IMR-90 (cell line): ENCODE measurements at regions of chrX and their contacts with region 1.

Region 1: GRCh38 chrX:150365051-150365989 is 2.2 kb downstream of the MAMLD1 start:
- DNase-seq: peak; percentile 50
- ATAC-seq: peak; percentile 30
- H3K4me3 ChIP-seq: peak overlapping the region; percentile 83
- H3K27ac ChIP-seq: peak overlapping the region; percentile 92
- H3K4me1 ChIP-seq: peaks cover 2% of the 10 kb centered on the region
- H3K27me3 ChIP-seq: no peaks in the 10 kb centered on the region
- CTCF ChIP-seq: peak; percentile 56
- POLR2A ChIP-seq: 0 out of 2 replicates have a peak, but pooled peaks have one; percentile 8
- RAD21 ChIP-seq: peak; percentile 32

Region 2: GRCh38 chrX:149950681-149951080 is 414.6 kb before region 1 on chrX:
- CTCF ChIA-PET with region 1: interaction called, 5 read pairs
- POLR2A ChIA-PET with region 1: no interaction called
- dilution Hi-C with region 1: no loop called
- in situ Hi-C with region 1: loop called (anchors 25 kb)
- intact Hi-C with region 1: loop called (anchors 1 kb)
- DNase-seq: peak; percentile 67
- ATAC-seq: peak; percentile 70; the same call in 1 of the 2 replicates
- H3K4me3 ChIP-seq: no peak overlapping the region
- H3K27ac ChIP-seq: no peak overlapping the region
- H3K4me1 ChIP-seq: no peaks in the 10 kb centered on the region
- H3K27me3 ChIP-seq: no peaks in the 10 kb centered on the region
- CTCF ChIP-seq: peak; percentile 48
- POLR2A ChIP-seq: no peak
- RAD21 ChIP-seq: peak; percentile 56

Region 3: GRCh38 chrX:150036181-150037040 is 328.9 kb before region 1 on chrX:
- CTCF ChIA-PET with region 1: no interaction called
- POLR2A ChIA-PET with region 1: no interaction called
- dilution Hi-C with region 1: no loop called
- in situ Hi-C with region 1: no loop called
- intact Hi-C with region 1: loop called (anchors 5 kb)
- DNase-seq: peak; percentile 70
- ATAC-seq: peak; percentile 27; the same call in 1 of the 2 replicates
- H3K4me3 ChIP-seq: no peak overlapping the region
- H3K27ac ChIP-seq: peak overlapping the region; percentile 78; the same call in 1 of the 2 replicates
- H3K4me1 ChIP-seq: peaks cover 6% of the 10 kb centered on the region; the same call in 1 of the 2 replicates
- H3K27me3 ChIP-seq: no peaks in the 10 kb centered on the region
- CTCF ChIP-seq: no peak
- POLR2A ChIP-seq: no peak
- RAD21 ChIP-seq: no peak

Region 4: GRCh38 chrX:150150076-150150779 is 215.1 kb before region 1 on chrX:
- CTCF ChIA-PET with region 1: no interaction called
- POLR2A ChIA-PET with region 1: no interaction called
- dilution Hi-C with region 1: no loop called
- in situ Hi-C with region 1: no loop called
- intact Hi-C with region 1: loop called (anchors 5 kb)
- DNase-seq: no peak
- ATAC-seq: no peak
- H3K4me3 ChIP-seq: no peak overlapping the region
- H3K27ac ChIP-seq: no peak overlapping the region
- H3K4me1 ChIP-seq: peaks cover 1% of the 10 kb centered on the region; the same call in 1 of the 2 replicates
- H3K27me3 ChIP-seq: no peaks in the 10 kb centered on the region; the same call in 1 of the 2 replicates
- CTCF ChIP-seq: no peak
- POLR2A ChIP-seq: no peak
- RAD21 ChIP-seq: no peak

Region 5: DNA sequence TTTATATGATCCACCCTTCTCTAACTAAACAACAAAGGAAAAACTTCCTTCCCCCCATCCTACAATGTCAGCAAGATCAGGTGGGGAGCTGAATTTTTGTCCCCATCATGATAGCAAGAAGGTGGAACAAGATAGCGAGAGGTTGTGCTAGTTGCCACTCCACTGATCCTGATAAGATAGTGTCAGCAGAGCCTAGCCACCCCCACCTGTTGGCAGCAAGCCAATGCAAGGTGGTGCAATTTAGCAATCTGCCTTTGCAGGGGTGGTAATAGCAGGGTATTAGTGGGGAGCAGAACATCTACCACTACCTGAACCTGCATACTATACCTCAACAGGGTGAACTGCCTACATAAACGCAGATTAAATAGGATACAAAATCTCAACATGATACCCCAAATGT is 82.4 kb before region 1 on chrX:
- CTCF ChIA-PET with region 1: no interaction called
- POLR2A ChIA-PET with region 1: no interaction called
- dilution Hi-C with region 1: no loop called
- in situ Hi-C with region 1: no loop called
- intact Hi-C with region 1: no loop called
- DNase-seq: no peak
- ATAC-seq: no peak
- H3K4me3 ChIP-seq: no peak overlapping the region
- H3K27ac ChIP-seq: no peak overlapping the region
- H3K4me1 ChIP-seq: no peaks in the 10 kb centered on the region
- H3K27me3 ChIP-seq: peaks cover 5% of the 10 kb centered on the region
- CTCF ChIP-seq: no peak
- POLR2A ChIP-seq: no peak
- RAD21 ChIP-seq: no peak

Region 6: GRCh38 chrX:150568320-150569154 is 203.2 kb after region 1 on chrX and contains the start of gene MTM1:
- CTCF ChIA-PET with region 1: no interaction called
- POLR2A ChIA-PET with region 1: no interaction called
- dilution Hi-C with region 1: no loop called
- in situ Hi-C with region 1: no loop called
- intact Hi-C with region 1: loop called (anchors 2 kb)
- DNase-seq: peak; percentile 92
- ATAC-seq: peak; percentile 96
- H3K4me3 ChIP-seq: peak within 1 kb of the TSS; percentile 92
- H3K27ac ChIP-seq: peak within 1 kb of the TSS; percentile 65
- H3K4me1 ChIP-seq: peaks cover 2% of the 10 kb centered on the region
- H3K27me3 ChIP-seq: no peaks in the 10 kb centered on the region; the same call in 1 of the 2 replicates
- CTCF ChIP-seq: no peak
- POLR2A ChIP-seq: peak; percentile 53; the same call in 1 of the 2 replicates
- RAD21 ChIP-seq: no peak
- total RNA-seq, gene MTM1: 5.6 and 8.3 TPM in 2 replicates

Region 7: GRCh38 chrX:150704030-150704613 is 338.8 kb after region 1 on chrX:
- CTCF ChIA-PET with region 1: no interaction called
- POLR2A ChIA-PET with region 1: no interaction called
- dilution Hi-C with region 1: no loop called
- in situ Hi-C with region 1: loop called (anchors 25 kb)
- intact Hi-C with region 1: no loop called
- DNase-seq: peak; percentile 71
- ATAC-seq: peak; percentile 48; the same call in 1 of the 2 replicates
- H3K4me3 ChIP-seq: no peak overlapping the region
- H3K27ac ChIP-seq: peak overlapping the region; percentile 35; the same call in 1 of the 2 replicates
- H3K4me1 ChIP-seq: peaks cover 4% of the 10 kb centered on the region; the same call in 1 of the 2 replicates
- H3K27me3 ChIP-seq: no peaks in the 10 kb centered on the region
- CTCF ChIP-seq: no peak
- POLR2A ChIP-seq: no peak
- RAD21 ChIP-seq: no peak